ENCODE measurements at regions of chr9 and their contacts with region 1.

Region 1: DNA sequence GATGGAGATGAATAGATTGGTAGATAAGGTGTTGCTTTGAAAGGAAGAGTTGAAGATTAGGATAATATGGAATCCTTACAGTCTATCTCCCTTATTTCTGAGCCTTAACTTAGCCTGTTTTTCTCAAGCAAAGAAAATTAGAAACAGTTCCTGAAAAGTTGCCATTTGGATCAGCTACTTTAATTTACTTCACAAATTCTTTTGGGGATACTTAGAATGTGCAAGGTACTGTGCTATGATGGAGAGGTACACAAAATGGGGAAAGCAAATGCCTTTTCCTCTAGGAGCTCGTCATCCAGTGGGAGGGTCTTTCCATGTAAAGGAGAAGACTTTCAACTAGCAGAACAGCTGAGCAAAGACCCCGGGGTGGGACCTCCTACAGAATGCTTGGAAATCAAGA is 51.1 kb upstream of the SMARCA2 start:
- DNase-seq: no peak
- ATAC-seq: no peak
- H3K4me3 ChIP-seq: no peak overlapping the region
- H3K27ac ChIP-seq: no peak overlapping the region
- H3K4me1 ChIP-seq: peaks cover 0 to 8% (median 0%) of the 10 kb centered on the region in 12 donors
- H3K27me3 ChIP-seq: no peaks in the 10 kb centered on the region
- CTCF ChIP-seq: no peak
- POLR2A ChIP-seq: no peak

Region 2: DNA sequence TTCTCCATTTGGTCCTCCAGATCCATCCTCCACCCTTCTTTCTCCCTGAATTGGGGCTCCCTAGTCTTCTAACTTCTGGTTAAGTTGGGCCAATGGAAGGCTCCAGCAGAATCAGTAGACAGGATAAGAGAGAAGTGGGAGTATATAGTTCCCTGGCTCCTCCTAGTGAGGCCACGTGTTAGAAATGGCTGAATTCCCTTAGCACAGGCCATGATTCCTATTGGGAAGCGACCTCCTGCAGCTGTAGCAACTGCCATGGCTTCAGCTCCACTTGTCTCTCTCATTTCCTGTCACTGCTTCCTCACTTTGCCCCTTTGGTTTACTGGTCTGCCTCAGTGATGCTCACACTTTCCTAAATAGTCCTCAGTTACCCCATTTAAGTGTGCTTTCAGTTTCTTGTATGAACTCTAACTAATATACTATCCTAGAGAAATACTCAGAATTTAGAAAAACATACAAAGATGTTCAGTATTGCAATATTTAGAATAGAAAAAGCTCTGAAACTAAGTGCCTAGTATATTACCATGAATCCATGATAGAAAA is 53.8 kb before region 1 on chr9:
- intact Hi-C with region 1: no loop called
- DNase-seq: no peak
- ATAC-seq: no peak
- H3K4me3 ChIP-seq: no peak overlapping the region
- H3K27ac ChIP-seq: no peak overlapping the region
- H3K4me1 ChIP-seq: no peaks in the 10 kb centered on the region
- H3K27me3 ChIP-seq: no peaks in the 10 kb centered on the region
- CTCF ChIP-seq: no peak
- POLR2A ChIP-seq: no peak

Region 3: GRCh38 chr9:1979741-1980367 is 15.8 kb after region 1 on chr9:
- intact Hi-C with region 1: loop called in 1 of 10 experiments (anchors 1 kb)
- DNase-seq: peak in 1 of 5 donors; percentile 27
- ATAC-seq: peak in 3 of 4 donors; percentile 49 to 61 (median 59)
- H3K4me3 ChIP-seq: no peak overlapping the region
- H3K27ac ChIP-seq: peak overlapping the region in 1 of 12 donors; percentile 42
- H3K4me1 ChIP-seq: peaks cover 0 to 21% (median 9%) of the 10 kb centered on the region in 12 donors
- H3K27me3 ChIP-seq: no peaks in the 10 kb centered on the region
- CTCF ChIP-seq: no peak
- POLR2A ChIP-seq: no peak

Region 4: DNA sequence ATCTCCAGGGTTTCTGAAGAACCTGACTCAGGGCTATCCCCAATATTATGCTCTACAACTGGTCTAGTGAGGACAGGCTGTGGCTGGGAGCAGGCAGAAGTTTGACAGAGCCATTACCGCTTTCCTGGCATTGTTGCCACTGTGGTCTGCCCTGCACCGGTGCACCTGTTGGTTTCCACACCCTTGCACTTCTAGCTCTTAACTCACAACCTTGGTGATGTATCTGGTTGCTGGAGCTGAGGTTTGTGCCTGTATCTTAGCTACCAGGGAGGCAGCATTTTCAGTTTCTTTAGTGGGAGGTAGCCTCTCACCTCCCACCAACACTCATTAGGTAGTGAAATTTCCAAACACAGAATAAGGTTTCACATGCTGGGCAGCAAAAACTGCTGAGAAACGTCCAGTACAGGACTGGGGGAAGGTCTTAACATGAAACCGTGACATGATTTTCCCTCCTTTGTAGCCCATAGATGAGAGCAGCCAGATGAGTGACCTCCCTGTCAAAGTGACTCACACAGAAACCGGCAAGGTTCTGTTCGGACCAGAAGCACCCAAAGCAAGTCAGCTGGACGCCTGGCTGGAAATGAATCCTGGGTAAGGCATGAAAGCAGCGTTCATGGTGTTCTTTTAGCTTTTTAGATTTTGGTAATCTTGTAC is 108.8 kb after region 1 on chr9:
- intact Hi-C with region 1: no loop called
- DNase-seq: no peak
- ATAC-seq: no peak
- H3K4me3 ChIP-seq: no peak overlapping the region
- H3K27ac ChIP-seq: no peak overlapping the region
- H3K4me1 ChIP-seq: peaks cover 0 to 2% (median 0%) of the 10 kb centered on the region in 12 donors
- H3K27me3 ChIP-seq: no peaks in the 10 kb centered on the region
- CTCF ChIP-seq: no peak
- POLR2A ChIP-seq: no peak